Endothelial cell of umbilical vein (primary cell): ENCODE measurements at regions of chr2 and their contacts with region 1.

Region 1: DNA sequence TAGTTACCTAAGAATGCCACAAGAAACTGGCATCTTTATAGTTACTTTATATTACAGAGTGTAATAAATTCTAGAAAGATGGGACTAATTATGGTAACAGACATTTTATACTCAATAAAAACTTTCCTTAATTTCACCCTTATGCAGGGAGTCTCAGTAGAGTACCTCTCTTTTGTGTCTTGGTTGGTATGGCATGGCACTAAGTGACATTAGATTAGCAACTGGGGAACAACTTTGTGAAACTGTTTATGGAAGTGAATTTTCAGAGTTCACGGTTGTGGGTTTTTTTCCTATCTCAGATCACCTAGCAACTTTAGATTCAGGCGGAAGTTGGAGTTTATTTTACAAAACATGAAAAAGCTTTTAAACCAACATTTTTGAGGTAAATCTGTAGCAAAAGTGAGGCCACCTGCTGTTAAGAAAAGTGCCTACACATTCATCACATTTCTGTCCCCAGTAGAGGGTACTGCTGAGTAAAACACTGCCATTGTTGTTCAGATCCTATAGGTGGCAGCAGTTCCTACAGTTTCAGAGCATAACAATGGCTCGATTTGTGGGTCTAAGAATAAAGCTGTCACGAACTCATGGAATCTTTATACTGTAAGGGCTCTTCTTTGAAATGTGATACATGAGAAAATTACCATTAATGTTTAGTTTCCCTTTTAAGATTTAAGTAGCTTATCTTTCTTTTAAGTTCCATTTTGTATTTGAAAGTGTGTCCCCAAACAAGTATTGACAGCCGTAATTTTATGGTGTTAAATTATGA is 117.6 kb downstream of the CAMKMT start:
- DNase-seq: peak; percentile 89
- H3K4me3 ChIP-seq: no peak overlapping the region
- H3K27ac ChIP-seq: no peak overlapping the region
- H3K4me1 ChIP-seq: no peaks in the 10 kb centered on the region
- H3K27me3 ChIP-seq: no peaks in the 10 kb centered on the region
- CTCF ChIP-seq: peak; percentile 97 to 99
- POLR2A ChIP-seq: no peak

Region 2: DNA sequence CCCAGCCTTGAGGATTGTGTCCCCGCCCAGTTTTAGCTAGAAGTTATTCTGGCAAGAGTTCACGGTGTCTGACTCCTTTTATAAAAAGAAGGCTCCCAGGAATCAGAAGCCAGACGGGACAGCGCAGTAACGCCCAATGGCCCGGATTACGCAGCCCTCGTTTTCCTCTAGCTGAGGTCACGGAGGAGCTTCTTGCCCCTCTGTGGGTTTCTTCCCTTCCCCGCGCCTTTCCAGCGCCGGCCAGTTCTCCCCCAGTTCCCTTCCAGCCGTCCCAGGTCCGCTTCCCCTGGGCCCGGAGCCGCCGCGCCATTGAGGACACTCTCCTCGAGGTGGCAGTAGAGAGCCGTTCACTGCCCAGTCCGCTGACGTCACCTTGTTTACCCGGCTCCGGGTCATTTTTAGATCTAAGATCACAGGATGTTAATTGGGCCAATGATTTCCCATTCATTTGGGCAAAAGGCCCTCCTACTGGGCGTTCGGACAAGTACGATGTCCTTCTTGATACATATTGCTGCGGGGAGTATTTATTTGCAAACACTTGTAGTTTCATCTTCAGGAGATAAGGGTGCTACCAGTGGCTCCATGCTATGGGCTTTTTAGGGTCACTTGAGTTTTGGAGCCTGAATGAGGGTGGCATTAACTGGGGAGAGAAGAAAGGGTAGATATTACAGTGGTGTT is 392.1 kb before region 1 on chr2:
- CTCF ChIA-PET with region 1: interaction called, 14 read pairs
- POLR2A ChIA-PET with region 1: no interaction called
- dilution Hi-C with region 1: no loop called
- intact Hi-C with region 1: loop called (anchors 1 kb)
- DNase-seq: peak; percentile 85
- H3K4me3 ChIP-seq: peak overlapping the region in 2 of 3 experiments; percentile 15 to 45
- H3K27ac ChIP-seq: no peak overlapping the region
- H3K4me1 ChIP-seq: peaks cover 4% of the 10 kb centered on the region
- H3K27me3 ChIP-seq: peaks cover 19 to 27% of the 10 kb centered on the region in 2 experiments
- CTCF ChIP-seq: peak; percentile 92 to 95
- POLR2A ChIP-seq: no peak

Region 3: DNA sequence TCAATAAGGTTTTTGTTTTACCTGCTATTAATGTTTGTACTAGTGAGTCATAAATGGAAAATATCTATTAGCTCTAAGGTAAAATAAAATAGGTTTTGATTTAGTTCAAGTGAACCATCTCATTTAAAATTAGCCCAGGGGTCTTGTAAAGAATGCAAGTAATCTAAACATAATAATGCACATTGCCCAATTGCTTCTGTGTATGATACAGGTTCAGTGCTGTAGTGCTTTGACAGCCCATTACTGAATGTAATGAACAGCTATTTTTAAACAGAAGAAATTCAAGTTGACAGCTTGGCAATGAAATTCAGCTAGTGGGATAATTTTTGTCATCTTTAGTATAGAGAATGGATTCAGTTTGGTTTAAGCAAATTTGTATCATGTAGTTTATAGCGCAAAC is 26.0 kb before region 1 on chr2:
- CTCF ChIA-PET with region 1: interaction called, 13 read pairs
- POLR2A ChIA-PET with region 1: no interaction called
- dilution Hi-C with region 1: no loop called
- intact Hi-C with region 1: no loop called
- DNase-seq: no peak
- H3K4me3 ChIP-seq: no peak overlapping the region
- H3K27ac ChIP-seq: no peak overlapping the region
- H3K4me1 ChIP-seq: peaks cover 3% of the 10 kb centered on the region
- H3K27me3 ChIP-seq: no peaks in the 10 kb centered on the region
- CTCF ChIP-seq: no peak
- POLR2A ChIP-seq: no peak

Region 4: GRCh38 chr2:44549095-44549463 is 69.8 kb after region 1 on chr2:
- CTCF ChIA-PET with region 1: interaction called, 25 read pairs
- POLR2A ChIA-PET with region 1: no interaction called
- dilution Hi-C with region 1: no loop called
- intact Hi-C with region 1: no loop called
- DNase-seq: peak; percentile 58
- H3K4me3 ChIP-seq: no peak overlapping the region
- H3K27ac ChIP-seq: peak overlapping the region; percentile 70
- H3K4me1 ChIP-seq: peaks cover 51% of the 10 kb centered on the region
- H3K27me3 ChIP-seq: no peaks in the 10 kb centered on the region
- CTCF ChIP-seq: no peak
- POLR2A ChIP-seq: no peak

Region 5: DNA sequence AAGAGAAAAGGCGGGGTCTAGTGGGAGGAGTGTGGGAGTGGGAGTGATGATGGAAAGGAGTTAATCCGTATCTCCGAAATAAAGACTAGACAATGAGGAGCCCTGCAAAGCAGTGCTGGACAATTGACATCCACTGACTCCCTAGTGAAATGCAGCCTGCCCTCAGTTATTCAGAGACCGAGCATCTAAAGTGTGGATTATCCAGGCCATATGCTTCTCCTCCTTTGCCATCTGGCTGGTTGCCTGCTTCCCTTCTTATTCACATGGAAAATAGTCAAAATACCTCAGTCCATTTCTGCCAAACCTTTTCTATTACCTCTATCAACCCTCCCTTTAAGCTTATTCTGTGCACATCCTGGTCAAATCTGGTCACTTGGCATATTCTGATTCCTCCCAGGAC is 173.4 kb after region 1 on chr2:
- CTCF ChIA-PET with region 1: interaction called, 11 read pairs
- POLR2A ChIA-PET with region 1: no interaction called
- dilution Hi-C with region 1: no loop called
- intact Hi-C with region 1: no loop called
- DNase-seq: no peak
- H3K4me3 ChIP-seq: no peak overlapping the region
- H3K27ac ChIP-seq: no peak overlapping the region
- H3K4me1 ChIP-seq: no peaks in the 10 kb centered on the region
- H3K27me3 ChIP-seq: no peaks in the 10 kb centered on the region
- CTCF ChIP-seq: no peak
- POLR2A ChIP-seq: no peak

Region 6: DNA sequence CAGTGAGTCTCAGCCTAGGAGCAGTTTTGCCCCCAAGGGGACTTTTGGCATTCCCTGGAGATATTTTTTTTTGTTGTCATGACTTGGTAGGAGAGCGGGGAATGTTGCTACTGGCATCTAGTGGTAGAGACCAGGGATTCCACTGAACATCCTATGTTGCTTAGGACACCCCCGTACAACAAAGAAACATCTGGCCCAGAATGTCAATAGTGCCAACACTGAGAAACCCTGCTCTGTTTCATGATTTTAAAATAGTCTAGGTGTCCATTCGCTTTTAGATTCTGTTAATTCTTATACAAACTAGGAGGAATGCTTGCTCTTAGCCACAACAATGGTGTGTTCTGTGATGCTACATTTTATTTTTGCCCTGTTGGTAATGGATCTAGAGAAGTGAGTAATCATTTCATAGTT is 236.4 kb after region 1 on chr2:
- CTCF ChIA-PET with region 1: interaction called, 89 read pairs
- POLR2A ChIA-PET with region 1: no interaction called
- dilution Hi-C with region 1: no loop called
- intact Hi-C with region 1: loop called (anchors 1 kb)
- DNase-seq: peak; percentile 26
- H3K4me3 ChIP-seq: no peak overlapping the region
- H3K27ac ChIP-seq: no peak overlapping the region
- H3K4me1 ChIP-seq: no peaks in the 10 kb centered on the region
- H3K27me3 ChIP-seq: no peaks in the 10 kb centered on the region
- CTCF ChIP-seq: peak; percentile 16 to 43
- POLR2A ChIP-seq: no peak

Region 7: DNA sequence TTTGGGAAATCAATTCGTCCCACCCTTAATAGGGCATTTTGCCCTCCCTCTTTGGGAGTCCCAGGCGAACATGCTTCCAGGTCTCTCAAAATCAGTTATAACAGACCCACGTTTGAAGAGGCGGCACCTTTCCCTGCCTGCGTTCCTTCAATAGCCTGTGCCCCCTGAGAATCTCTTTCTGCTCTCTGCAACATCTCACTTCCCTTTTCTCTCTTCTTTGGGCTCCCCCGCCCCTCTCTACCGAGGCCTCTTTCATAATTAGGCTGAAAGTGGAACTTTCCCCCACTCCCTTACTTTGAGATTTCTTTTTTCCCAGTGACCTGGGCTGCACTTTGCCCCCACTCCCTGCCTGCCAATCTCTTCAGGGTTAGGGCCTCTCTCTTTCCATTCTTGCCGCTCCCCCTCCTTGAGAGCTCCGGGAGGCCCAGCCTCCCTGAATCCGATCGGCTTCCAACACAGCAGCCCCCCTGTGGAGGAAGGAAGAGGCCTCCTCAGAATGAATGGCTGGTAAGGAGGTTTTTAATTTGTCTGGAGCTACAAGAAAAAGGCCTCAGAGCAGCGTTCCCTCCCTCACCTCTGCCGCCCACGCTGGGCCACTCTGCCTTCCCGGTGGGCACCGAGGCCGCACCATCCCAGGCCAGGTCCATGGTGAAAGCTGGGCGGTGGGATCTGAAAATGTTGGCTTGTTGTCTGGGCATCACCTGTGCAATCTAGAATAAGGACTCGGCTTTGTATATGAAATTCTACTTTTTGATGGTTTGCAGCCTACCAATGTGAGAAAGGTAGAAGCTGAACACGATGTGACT is 299.6 kb after region 1 on chr2:
- CTCF ChIA-PET with region 1: interaction called, 10 read pairs
- POLR2A ChIA-PET with region 1: no interaction called
- dilution Hi-C with region 1: no loop called
- intact Hi-C with region 1: no loop called
- DNase-seq: no peak
- H3K4me3 ChIP-seq: no peak overlapping the region
- H3K27ac ChIP-seq: no peak overlapping the region
- H3K4me1 ChIP-seq: no peaks in the 10 kb centered on the region
- H3K27me3 ChIP-seq: peaks cover 7 to 10% of the 10 kb centered on the region in 2 experiments
- CTCF ChIP-seq: no peak
- POLR2A ChIP-seq: no peak

Region 8: GRCh38 chr2:44850016-44850415 is 370.7 kb after region 1 on chr2:
- CTCF ChIA-PET with region 1: no interaction called
- POLR2A ChIA-PET with region 1: no interaction called
- dilution Hi-C with region 1: no loop called
- intact Hi-C with region 1: no loop called
- DNase-seq: no peak
- H3K4me3 ChIP-seq: no peak overlapping the region
- H3K27ac ChIP-seq: no peak overlapping the region
- H3K4me1 ChIP-seq: no peaks in the 10 kb centered on the region
- H3K27me3 ChIP-seq: peaks cover 3 to 11% of the 10 kb centered on the region in 2 experiments
- CTCF ChIP-seq: no peak
- POLR2A ChIP-seq: no peak

Region 9: GRCh38 chr2:44981136-44982108 is 502.1 kb after region 1 on chr2:
- CTCF ChIA-PET with region 1: no interaction called
- POLR2A ChIA-PET with region 1: no interaction called
- dilution Hi-C with region 1: no loop called
- intact Hi-C with region 1: no loop called
- DNase-seq: peak; percentile 70
- H3K4me3 ChIP-seq: no peak overlapping the region
- H3K27ac ChIP-seq: no peak overlapping the region
- H3K4me1 ChIP-seq: no peaks in the 10 kb centered on the region
- H3K27me3 ChIP-seq: peaks cover 6 to 9% of the 10 kb centered on the region in 2 experiments
- CTCF ChIP-seq: peak; percentile 70 to 83
- POLR2A ChIP-seq: no peak